ENCODE measurements at regions of chr12 and their contacts with region 1.

Region 1: DNA sequence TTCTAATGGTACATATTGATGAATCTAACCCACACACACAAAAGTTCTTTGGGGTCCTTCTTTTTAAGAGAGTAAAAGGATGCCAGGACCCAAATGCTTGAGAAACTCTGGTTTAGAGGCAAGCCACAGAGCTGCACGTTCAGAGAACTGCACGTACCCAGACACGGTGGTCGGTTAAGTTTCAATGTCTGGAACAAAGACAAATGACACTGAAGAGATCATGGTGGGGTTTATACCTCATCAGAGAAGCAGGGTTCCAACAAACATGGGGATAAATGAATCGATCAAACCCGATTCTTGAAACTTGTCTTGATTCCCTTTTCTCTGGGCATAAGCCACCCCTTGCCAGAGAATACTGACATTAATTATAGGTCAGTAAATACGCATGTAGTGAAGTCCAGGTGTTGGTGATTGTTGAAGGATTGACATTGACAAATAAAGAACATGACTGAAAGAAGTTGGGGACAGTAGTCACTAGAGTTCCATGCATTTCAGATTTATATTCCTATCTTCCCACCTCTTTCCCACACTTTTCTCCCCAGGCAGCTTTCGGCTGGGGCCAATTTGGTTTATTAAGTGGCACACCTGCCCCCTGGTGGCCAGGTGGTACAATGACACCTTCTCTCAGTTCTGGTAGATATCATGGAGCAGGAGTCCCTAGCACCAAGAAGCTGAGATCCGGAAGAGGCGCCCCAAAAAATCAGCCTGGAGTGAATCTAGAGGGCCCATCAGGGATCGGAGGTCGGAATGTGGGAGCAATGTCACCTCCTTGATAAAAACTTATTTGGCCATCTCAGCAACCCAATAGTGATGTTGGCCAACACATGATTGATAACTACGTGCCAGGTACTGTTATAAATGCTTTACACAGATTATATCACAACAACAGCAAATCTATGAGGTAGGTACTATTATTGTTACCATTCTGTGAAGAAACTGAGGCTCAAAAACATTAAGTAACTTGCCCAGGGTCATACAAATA is 17.8 kb upstream of the HDAC7 start:
- DNase-seq: peak; percentile 71 to 86 (median 72)
- ATAC-seq: peak; percentile 39
- H3K4me3 ChIP-seq: no peak overlapping the region
- H3K27ac ChIP-seq: no peak overlapping the region
- H3K4me1 ChIP-seq: peaks cover 34 to 56% of the 10 kb centered on the region in 2 experiments
- H3K27me3 ChIP-seq: no peaks in the 10 kb centered on the region; a peak in 1 of 5 replicates
- CTCF ChIP-seq: peak; percentile 86 to 95 (median 92)
- EP300 ChIP-seq: no peak
- POLR2A ChIP-seq: no peak
- RAD21 ChIP-seq: peak; percentile 89 to 96

Region 2: GRCh38 chr12:47715393-47715876 is 122.0 kb before region 1 on chr12:
- CTCF ChIA-PET with region 1: interaction called, 32 read pairs
- POLR2A ChIA-PET with region 1: interaction called, 4 read pairs
- in situ Hi-C with region 1: loop called (anchors 5 kb)
- intact Hi-C with region 1: loop called (anchors 1 kb)
- DNase-seq: peak; percentile 62 to 92 (median 66)
- ATAC-seq: peak; percentile 83
- H3K4me3 ChIP-seq: no peak overlapping the region
- H3K27ac ChIP-seq: no peak overlapping the region
- H3K4me1 ChIP-seq: peaks cover 3 to 4% of the 10 kb centered on the region in 2 experiments; a peak in 4 of 5 replicates
- H3K27me3 ChIP-seq: no peaks in the 10 kb centered on the region
- CTCF ChIP-seq: peak; percentile 80 to 89 (median 84)
- EP300 ChIP-seq: no peak
- POLR2A ChIP-seq: no peak
- RAD21 ChIP-seq: peak; percentile 85 to 91

Region 3: DNA sequence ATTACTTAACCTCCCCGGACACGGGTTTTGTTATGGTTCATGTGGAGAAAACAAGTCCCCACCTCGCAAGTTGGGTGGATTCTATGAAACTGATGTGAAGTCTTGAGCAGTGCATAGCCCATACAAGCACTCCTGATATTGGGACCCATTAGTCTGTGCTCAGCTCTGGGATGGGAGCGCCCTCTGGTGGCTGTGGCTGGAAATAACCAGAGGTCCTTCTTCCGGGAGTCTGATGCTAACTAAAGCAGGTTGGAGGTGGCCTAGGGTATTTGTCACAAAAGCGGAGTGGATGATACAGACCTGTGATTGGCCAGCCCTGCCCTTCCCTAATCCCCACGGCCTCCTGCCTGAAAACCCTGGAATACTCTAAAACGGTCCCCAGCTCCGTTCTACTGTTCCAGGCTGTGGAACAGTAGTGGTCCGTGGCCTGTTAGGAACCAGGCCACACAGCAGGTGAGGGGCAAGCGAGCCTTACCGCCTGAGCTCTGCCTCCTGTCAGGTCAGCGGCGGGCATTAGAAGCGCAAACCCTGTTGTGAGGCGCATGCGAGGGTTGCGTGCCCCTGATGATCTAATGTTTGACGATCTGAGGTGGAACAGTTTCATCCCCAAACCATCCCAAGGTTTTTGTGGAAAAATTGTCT is 58.1 kb before region 1 on chr12:
- CTCF ChIA-PET with region 1: no interaction called
- POLR2A ChIA-PET with region 1: interaction called, 9 read pairs
- in situ Hi-C with region 1: no loop called
- intact Hi-C with region 1: loop called (anchors 1 kb)
- DNase-seq: peak; percentile 71 to 92 (median 76)
- ATAC-seq: peak; percentile 75
- H3K4me3 ChIP-seq: no peak overlapping the region
- H3K27ac ChIP-seq: no peak overlapping the region
- H3K4me1 ChIP-seq: peaks cover 47 to 78% of the 10 kb centered on the region in 2 experiments
- H3K27me3 ChIP-seq: no peaks in the 10 kb centered on the region
- CTCF ChIP-seq: peak; percentile 90 to 97 (median 95)
- EP300 ChIP-seq: peak; percentile 13; the same call in 1 of the 2 replicates
- POLR2A ChIP-seq: no peak
- RAD21 ChIP-seq: peak; percentile 89 to 94

Region 4: GRCh38 chr12:47797441-47797840 is 40.0 kb before region 1 on chr12:
- CTCF ChIA-PET with region 1: interaction called, 11 read pairs
- POLR2A ChIA-PET with region 1: no interaction called
- in situ Hi-C with region 1: no loop called
- intact Hi-C with region 1: loop called (anchors 5 kb)
- DNase-seq: no peak
- ATAC-seq: peak; percentile 65
- H3K4me3 ChIP-seq: no peak overlapping the region
- H3K27ac ChIP-seq: no peak overlapping the region
- H3K4me1 ChIP-seq: peaks cover 0 to 30% of the 10 kb centered on the region in 2 experiments; a peak in 3 of 5 replicates
- H3K27me3 ChIP-seq: no peaks in the 10 kb centered on the region
- CTCF ChIP-seq: peak in 2 of 3 experiments; percentile 43 to 56; a peak in 5 of 6 replicates
- EP300 ChIP-seq: no peak
- POLR2A ChIP-seq: no peak
- RAD21 ChIP-seq: peak; percentile 27 to 58

Region 5: DNA sequence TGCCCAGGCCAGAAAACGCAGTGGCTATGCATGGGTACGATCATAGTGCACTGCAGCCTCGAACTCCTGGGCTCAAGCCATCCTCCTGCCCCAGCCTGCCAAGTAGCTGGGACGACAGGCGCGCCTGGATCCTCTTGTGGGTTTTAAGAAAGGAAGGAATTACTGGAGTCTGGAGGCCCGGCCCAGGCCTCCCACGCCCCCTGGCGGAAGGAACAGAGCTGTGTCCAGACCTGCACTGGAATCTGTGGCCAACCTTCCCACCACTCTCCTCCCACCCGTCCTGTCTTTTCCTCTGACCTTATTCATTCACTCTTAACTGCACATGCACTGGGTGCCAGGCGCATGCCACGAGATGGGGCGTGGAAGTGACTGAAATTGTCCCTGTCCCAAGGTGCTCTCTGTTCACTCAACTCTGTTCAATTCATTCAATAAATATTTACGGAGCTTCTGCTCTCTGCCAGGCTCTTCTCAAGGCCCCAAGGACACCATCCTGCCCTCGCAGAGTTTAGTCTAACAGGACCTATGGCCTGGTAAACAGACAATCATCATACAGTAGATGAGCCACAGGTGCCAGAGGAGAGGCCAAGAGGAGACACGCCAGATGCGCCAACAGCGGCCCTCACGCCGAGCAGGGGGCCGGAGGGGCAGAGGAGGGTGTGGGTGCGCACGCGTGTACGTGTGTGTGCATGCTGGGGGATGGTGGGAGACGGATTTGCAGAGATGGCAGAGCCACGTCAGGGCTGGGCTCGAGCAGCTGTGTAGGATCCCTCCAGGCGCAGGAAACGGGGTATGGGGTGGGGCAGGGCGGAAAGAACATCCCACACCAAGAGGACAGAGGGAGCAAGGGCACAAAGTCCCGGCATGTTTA is 112.2 kb after region 1 on chr12:
- CTCF ChIA-PET with region 1: no interaction called
- POLR2A ChIA-PET with region 1: no interaction called
- in situ Hi-C with region 1: no loop called
- intact Hi-C with region 1: loop called (anchors 5 kb)
- DNase-seq: peak; percentile 83 to 86 (median 84)
- ATAC-seq: peak; percentile 96
- H3K4me3 ChIP-seq: no peak overlapping the region
- H3K27ac ChIP-seq: no peak overlapping the region
- H3K4me1 ChIP-seq: peaks cover 0 to 11% of the 10 kb centered on the region in 2 experiments; a peak in 3 of 5 replicates
- H3K27me3 ChIP-seq: peaks cover 6 to 49% of the 10 kb centered on the region in 2 experiments; a peak in 3 of 5 replicates
- CTCF ChIP-seq: peak; percentile 88 to 92 (median 92)
- EP300 ChIP-seq: no peak
- POLR2A ChIP-seq: no peak
- RAD21 ChIP-seq: peak; percentile 78 to 87

Region 6: DNA sequence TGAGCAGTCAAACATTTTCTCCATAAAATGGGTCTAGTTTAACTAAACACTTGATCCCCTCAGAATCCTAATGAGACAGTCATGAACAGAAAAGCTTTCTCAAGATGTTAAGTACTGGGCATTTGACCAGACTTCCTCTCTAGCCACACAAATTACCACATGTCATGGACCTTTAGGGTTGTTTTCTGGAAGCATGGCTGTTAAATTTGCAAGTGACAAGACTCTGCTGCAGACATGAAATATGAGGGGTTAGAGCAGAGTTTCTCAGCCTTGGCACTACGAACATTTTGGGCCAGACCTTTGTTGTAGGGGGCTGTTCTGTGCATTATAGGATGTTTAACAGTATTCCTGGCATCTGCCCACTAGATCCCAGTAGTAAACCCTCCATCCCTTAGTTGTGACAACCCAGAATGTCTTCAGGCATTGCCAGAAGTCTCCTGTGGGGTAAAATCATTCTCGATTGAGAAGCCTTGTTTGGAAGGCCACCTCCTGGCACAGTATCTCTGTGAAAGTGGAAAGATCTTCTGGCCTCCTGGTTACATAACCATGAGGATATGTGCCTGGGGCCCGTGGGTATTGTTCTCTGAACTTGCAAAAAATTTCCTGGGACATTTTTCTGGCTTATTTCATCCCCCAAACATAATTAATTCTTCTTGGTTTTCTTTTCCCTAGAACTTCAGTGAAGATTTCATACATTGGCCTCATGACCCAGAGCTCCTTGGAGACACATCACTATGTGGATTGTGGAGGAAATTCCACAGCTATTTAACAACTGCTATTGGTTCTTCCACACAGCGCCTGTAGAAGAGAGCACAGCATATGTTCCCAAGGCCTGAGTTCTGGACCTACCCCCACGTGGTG is 130.2 kb after region 1 on chr12:
- CTCF ChIA-PET with region 1: no interaction called
- POLR2A ChIA-PET with region 1: no interaction called
- in situ Hi-C with region 1: no loop called
- intact Hi-C with region 1: no loop called
- DNase-seq: no peak
- ATAC-seq: no peak
- H3K4me3 ChIP-seq: no peak overlapping the region
- H3K27ac ChIP-seq: no peak overlapping the region
- H3K4me1 ChIP-seq: peaks cover 6 to 11% of the 10 kb centered on the region in 2 experiments; a peak in 4 of 5 replicates
- H3K27me3 ChIP-seq: peaks cover 8% of the 10 kb centered on the region in 2 experiments; a peak in 3 of 5 replicates
- CTCF ChIP-seq: no peak
- EP300 ChIP-seq: no peak
- POLR2A ChIP-seq: no peak
- RAD21 ChIP-seq: no peak

Region 7: DNA sequence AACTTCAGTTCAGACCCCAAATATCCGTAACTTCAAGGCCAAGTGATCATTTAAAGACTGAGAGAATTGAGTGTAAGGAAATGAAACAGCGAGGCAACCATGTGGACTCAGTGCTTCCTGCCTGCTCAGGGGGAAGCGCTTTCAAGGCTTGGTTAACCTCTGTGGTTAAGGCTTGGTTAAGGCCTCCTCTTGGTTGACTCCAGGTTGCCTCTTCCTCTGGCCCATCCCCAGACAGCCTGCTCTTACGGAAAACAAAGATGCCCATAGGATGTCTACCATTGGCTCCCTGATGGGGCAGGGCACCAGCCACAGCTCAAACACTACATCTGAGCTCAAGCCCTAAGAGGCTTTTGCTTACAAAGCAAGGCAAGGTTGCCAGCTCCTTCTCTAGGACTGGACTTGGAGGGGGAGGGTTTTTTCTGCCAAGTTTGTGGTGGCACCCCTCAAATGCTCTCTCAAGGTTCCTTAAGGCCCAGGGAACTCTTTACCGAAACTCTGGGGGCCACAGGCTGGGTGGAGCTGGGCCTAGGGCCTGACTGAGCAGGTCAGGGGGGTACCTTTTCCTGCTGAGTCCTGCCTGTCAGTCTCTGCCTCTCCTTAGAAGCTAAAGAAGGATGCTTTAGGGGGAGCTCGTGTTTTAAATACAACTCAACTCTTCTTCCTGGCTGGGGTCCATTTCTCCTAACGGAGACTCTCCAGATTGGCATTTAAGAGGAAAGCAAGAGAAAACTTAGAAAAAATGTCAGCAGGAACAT is 153.0 kb after region 1 on chr12:
- CTCF ChIA-PET with region 1: no interaction called
- POLR2A ChIA-PET with region 1: no interaction called
- in situ Hi-C with region 1: no loop called
- intact Hi-C with region 1: no loop called
- DNase-seq: no peak
- ATAC-seq: no peak
- H3K4me3 ChIP-seq: no peak overlapping the region
- H3K27ac ChIP-seq: no peak overlapping the region
- H3K4me1 ChIP-seq: no peaks in the 10 kb centered on the region; a peak in 1 of 5 replicates
- H3K27me3 ChIP-seq: peaks cover 50 to 96% of the 10 kb centered on the region in 2 experiments
- CTCF ChIP-seq: peak in 1 of 3 experiments; percentile 19; a peak in 1 of 6 replicates
- EP300 ChIP-seq: no peak
- POLR2A ChIP-seq: no peak
- RAD21 ChIP-seq: no peak; a peak in 1 of 4 replicates